AG04449 (cell line): ENCODE measurements at regions of chr11 and their contacts with region 1.

Region 1: GRCh38 chr11:65134386-65135253 is at the start of gene SYVN1:
- DNase-seq: peak; percentile 87
- H3K4me3 ChIP-seq: peak within 1 kb of the TSS; percentile 95
- CTCF ChIP-seq: no peak

Region 2: GRCh38 chr11:65117216-65118096 is 17.2 kb before region 1 on chr11 and contains the start of gene ZNHIT2:
- CTCF ChIA-PET with region 1: interaction called, 9 read pairs
- POLR2A ChIA-PET with region 1: interaction called, 20 read pairs
- DNase-seq: peak; percentile 84
- H3K4me3 ChIP-seq: peak within 1 kb of the TSS; percentile 94
- CTCF ChIP-seq: peak; percentile 87

Region 3: GRCh38 chr11:65148657-65149056 is 14.0 kb after region 1 on chr11:
- CTCF ChIA-PET with region 1: interaction called, 11 read pairs
- POLR2A ChIA-PET with region 1: interaction called, 4 read pairs
- DNase-seq: no peak
- H3K4me3 ChIP-seq: no peak overlapping the region
- CTCF ChIP-seq: no peak

Region 4: DNA sequence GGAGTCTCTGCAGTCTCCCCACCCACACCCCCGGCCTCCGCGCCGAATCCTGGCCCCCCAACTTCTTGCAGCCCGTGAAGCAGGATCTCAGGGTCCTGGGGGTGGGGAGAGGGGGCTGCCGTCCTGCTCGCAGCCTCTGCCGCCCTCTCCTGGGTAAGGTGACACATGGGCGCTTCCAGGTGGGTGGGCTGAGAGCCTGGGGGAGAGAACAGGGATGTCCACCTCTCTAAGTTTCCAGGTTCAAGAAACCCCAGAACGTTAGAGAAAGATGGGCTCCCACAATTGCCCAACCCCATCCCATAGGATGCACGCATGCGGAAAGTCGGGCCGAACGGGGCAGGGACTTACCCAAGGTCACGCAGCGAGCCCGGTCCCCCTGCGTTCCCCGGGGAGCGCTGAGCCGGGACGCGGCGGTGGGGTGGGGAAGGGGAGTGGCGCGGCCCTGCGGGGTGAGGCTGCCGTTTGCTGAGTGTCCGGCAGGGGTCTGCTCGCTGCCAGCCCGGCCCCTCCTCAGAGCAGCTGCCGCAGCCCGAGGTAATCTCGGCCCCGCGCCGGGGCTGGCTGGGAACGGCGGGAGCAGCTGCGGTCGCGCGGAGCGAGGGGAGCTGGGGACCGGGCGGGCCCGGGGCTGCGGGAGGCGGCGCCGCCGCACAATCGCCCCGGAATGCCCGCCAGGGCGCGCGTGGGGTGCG is 46.4 kb after region 1 on chr11:
- CTCF ChIA-PET with region 1: interaction called, 3 read pairs
- POLR2A ChIA-PET with region 1: interaction called, 14 read pairs
- DNase-seq: no peak
- H3K4me3 ChIP-seq: peak overlapping the region; percentile 86
- CTCF ChIP-seq: peak; percentile 76

Region 5: DNA sequence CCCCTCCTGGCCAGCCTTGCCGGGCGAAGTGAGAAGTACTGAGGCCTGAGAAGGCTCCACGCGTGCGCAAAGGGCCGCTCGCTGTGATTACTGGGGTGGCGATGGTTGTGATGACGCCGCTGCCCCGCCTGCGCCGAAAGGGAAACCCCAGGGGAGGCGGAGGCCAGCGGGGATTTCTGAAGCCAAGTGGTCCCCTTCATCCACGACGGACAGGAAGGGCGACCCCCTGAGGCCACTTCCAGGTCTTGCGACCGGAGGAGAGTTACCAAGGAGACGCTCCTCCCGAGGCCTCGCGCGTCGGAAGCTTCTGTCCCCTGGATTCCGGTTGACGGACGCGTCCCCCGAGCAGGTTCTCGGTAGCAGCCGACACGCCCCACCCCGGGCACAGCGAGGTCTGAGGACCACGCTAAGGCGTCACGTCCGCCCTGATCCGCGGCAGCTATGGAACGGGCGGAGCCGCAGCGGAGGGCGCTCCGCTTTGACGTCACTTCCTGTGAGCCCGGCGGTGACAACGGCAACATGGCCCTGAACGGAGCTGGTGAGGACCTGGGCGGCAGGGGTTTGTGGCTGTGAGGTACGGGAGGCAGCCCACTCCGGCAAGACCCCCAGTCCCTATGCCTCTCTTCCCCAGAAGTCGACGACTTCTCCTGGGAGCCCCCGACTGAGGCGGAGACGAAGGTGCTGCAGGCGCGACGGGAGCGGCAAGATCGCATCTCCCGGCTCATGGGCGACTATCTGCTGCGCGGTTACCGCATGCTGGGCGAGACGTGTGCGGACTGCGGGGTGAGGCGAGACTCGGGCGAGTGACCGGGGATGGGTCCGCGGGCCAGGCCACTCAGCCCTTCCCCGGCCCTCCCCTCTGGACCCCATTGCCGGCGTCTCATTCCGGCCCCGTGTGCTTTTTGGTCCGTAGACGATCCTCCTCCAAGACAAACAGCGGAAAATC is 435.6 kb after region 1 on chr11 and contains the start of gene ZNRD2:
- CTCF ChIA-PET with region 1: no interaction called
- POLR2A ChIA-PET with region 1: no interaction called
- DNase-seq: peak; percentile 88
- H3K4me3 ChIP-seq: peak within 1 kb of the TSS; percentile 89
- CTCF ChIP-seq: peak; percentile 62